Caco-2 (cell line): ENCODE measurements at regions of chr11 and their contacts with region 1.

Region 1: GRCh38 chr11:46238967-46239800 is 38.3 kb upstream of the CREB3L1 start:
- DNase-seq: peak; percentile 88 to 94
- H3K4me3 ChIP-seq: peak overlapping the region; percentile 60
- H3K4me3 Mint-ChIP-seq: peak overlapping the region; percentile 91
- H3K27ac Mint-ChIP-seq: peak overlapping the region; percentile 77
- H3K4me1 ChIP-seq: peaks cover 6% of the 10 kb centered on the region
- H3K4me1 Mint-ChIP-seq: peaks cover 42% of the 10 kb centered on the region
- H3K27me3 ChIP-seq: no peaks in the 10 kb centered on the region; the same call in 1 of the 2 replicates
- H3K27me3 Mint-ChIP-seq: peaks cover 8% of the 10 kb centered on the region
- CTCF ChIP-seq: peak; percentile 91 to 98

Region 2: GRCh38 chr11:46121724-46122477 is 117.3 kb before region 1 on chr11:
- CTCF ChIA-PET with region 1: interaction called, 6 read pairs
- POLR2A ChIA-PET with region 1: interaction called, 4 read pairs
- intact Hi-C with region 1: loop called (anchors 5 kb)
- DNase-seq: peak; percentile 81 to 84
- H3K4me3 ChIP-seq: peak overlapping the region; percentile 85
- H3K4me3 Mint-ChIP-seq: peak overlapping the region; percentile 94
- H3K27ac Mint-ChIP-seq: peak overlapping the region; percentile 53
- H3K4me1 ChIP-seq: peaks cover 7% of the 10 kb centered on the region
- H3K4me1 Mint-ChIP-seq: peaks cover 16% of the 10 kb centered on the region
- H3K27me3 ChIP-seq: no peaks in the 10 kb centered on the region
- H3K27me3 Mint-ChIP-seq: no peaks in the 10 kb centered on the region
- CTCF ChIP-seq: no peak

Region 3: DNA sequence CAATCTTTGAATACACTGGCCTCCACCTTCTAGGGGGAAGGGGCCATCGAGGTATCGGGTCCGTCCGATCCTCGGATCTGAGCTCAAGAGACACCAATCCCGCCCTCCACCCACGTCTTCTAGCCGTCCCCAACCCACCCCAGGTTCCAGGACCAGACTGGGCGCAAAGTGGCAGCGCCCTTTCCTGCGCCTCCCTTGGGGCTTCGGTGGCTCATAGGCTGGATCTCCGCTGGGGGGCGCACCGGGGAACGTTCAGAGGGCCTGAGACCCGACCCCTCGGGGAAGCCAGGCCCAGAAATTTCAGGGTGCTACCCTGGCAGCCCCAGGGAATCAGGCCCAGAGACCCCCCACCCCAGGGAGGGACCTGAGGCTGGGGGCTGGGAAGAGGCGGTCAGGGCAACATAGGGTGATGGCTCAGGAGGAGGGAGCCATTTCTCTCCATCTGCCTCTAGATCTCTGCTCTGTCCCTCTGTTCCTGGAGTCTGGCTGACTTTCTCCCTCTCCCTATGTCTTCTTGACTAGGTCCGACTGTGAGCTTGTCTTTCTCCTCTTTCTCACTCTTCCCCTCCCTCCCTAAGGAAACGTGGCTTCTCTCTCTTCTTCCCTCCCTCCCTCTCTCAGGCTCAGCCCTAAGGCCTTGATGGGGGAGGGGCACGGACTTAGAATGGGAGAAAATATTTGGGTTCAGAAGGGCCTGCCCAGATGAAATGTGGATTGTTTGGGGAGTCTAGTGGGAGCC is 39.4 kb after region 1 on chr11:
- CTCF ChIA-PET with region 1: interaction called, 8 read pairs
- POLR2A ChIA-PET with region 1: interaction called, 23 read pairs
- intact Hi-C with region 1: no loop called
- DNase-seq: peak; percentile 62 to 74
- H3K4me3 ChIP-seq: peak overlapping the region; percentile 85
- H3K4me3 Mint-ChIP-seq: peak overlapping the region; percentile 89
- H3K27ac Mint-ChIP-seq: peak overlapping the region; percentile 20
- H3K4me1 ChIP-seq: peaks cover 57% of the 10 kb centered on the region
- H3K4me1 Mint-ChIP-seq: peaks cover 60% of the 10 kb centered on the region
- H3K27me3 ChIP-seq: no peaks in the 10 kb centered on the region
- H3K27me3 Mint-ChIP-seq: no peaks in the 10 kb centered on the region
- CTCF ChIP-seq: peak; percentile 63 to 82

Region 4: GRCh38 chr11:46315033-46315738 is 76.0 kb after region 1 on chr11:
- CTCF ChIA-PET with region 1: interaction called, 181 read pairs
- POLR2A ChIA-PET with region 1: no interaction called
- intact Hi-C with region 1: loop called (anchors 1 kb)
- DNase-seq: peak; percentile 85 to 87
- H3K4me3 ChIP-seq: no peak overlapping the region
- H3K4me3 Mint-ChIP-seq: no peak overlapping the region
- H3K27ac Mint-ChIP-seq: peak overlapping the region; percentile 14
- H3K4me1 ChIP-seq: no peaks in the 10 kb centered on the region
- H3K4me1 Mint-ChIP-seq: no peaks in the 10 kb centered on the region
- H3K27me3 ChIP-seq: no peaks in the 10 kb centered on the region
- H3K27me3 Mint-ChIP-seq: no peaks in the 10 kb centered on the region
- CTCF ChIP-seq: peak; percentile 92 to 97

Region 5: GRCh38 chr11:46392421-46393230 is 153.4 kb after region 1 on chr11:
- CTCF ChIA-PET with region 1: interaction called, 16 read pairs
- POLR2A ChIA-PET with region 1: interaction called, 9 read pairs
- intact Hi-C with region 1: no loop called
- DNase-seq: peak; percentile 89 to 95
- H3K4me3 ChIP-seq: peak overlapping the region; percentile 55
- H3K4me3 Mint-ChIP-seq: peak overlapping the region; percentile 75
- H3K27ac Mint-ChIP-seq: peak overlapping the region; percentile 50
- H3K4me1 ChIP-seq: peaks cover 11% of the 10 kb centered on the region
- H3K4me1 Mint-ChIP-seq: peaks cover 19% of the 10 kb centered on the region
- H3K27me3 ChIP-seq: peaks cover 6% of the 10 kb centered on the region
- H3K27me3 Mint-ChIP-seq: peaks cover 8% of the 10 kb centered on the region
- CTCF ChIP-seq: no peak